Colonic mucosa (tissue), 4 donors: ENCODE measurements at regions of chrX and their contacts with region 1.

Region 1: GRCh38 chrX:16719334-16720084 is at the start of gene SYAP1:
- DNase-seq: peak; percentile 99
- H3K4me3 ChIP-seq: peak within 1 kb of the TSS; percentile 82
- H3K27ac ChIP-seq: peak within 1 kb of the TSS; percentile 95
- H3K4me1 ChIP-seq: no peaks in the 10 kb centered on the region
- H3K27me3 ChIP-seq: no peaks in the 10 kb centered on the region
- CTCF ChIP-seq: no peak
- total RNA-seq, gene SYAP1: 45.8 to 63.5 TPM

Region 2: GRCh38 chrX:16786139-16786790 is 66.8 kb after region 1 on chrX and contains the start of gene TXLNG:
- intact Hi-C with region 1: loop called (anchors 10 kb)
- DNase-seq: peak; percentile 99
- H3K4me3 ChIP-seq: peak within 1 kb of the TSS; percentile 86
- H3K27ac ChIP-seq: peak within 1 kb of the TSS; percentile 55
- H3K4me1 ChIP-seq: peaks cover 10% of the 10 kb centered on the region
- H3K27me3 ChIP-seq: no peaks in the 10 kb centered on the region
- CTCF ChIP-seq: no peak
- total RNA-seq, gene TXLNG: 8.8 to 11.3 TPM